ENCODE measurements at regions of chr4 and their contacts with region 1.

Region 1: DNA sequence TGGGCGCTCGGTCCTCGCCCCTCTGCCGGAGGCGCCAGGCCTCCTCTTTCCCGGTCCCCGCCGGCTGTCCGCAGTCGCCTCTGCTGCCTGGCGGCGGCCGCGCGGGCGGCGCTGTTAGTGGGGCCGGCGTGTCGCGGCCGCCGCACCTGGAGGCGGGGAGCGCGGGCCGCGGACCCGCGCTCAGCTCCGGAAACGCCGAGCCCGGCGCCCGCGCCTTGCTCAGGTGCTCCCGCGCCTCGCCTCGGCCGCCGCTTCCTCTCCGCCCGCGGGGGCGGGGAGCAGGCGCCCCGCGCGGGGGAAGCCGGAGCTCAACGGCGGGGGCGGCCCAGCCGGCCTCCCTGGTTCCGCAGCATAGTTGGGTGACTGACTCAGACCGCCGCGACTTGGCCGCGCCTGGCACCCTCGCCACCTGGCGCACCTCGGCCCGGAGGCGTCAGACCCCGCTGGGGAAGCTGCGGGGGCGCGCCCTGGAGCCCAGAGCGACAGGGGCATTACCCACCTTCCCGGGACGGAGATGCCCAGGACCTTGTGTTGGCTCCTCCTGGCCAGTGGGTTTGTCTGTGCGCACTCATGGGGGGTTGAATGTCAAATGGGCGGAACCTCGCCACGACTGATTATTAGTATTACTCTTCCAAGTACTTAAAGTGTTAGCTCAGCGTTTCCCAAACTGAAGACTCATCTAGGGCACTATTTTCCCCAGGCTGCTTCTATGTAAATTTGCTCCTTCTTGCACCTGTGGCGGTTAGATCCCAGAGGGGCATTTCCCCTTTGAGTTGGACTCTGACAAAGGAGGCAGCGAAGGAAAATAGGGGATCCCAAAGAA is at the start of gene ARAP2:
- DNase-seq: peak; percentile 81 to 89
- ATAC-seq: peak; percentile 78 to 87 (median 87)
- H3K4me3 ChIP-seq: peak within 1 kb of the TSS; percentile 84
- H3K4me3 Mint-ChIP-seq: peak within 1 kb of the TSS; percentile 99
- H3K27ac ChIP-seq: peak within 1 kb of the TSS; percentile 97
- H3K27ac Mint-ChIP-seq: peak within 1 kb of the TSS; percentile 95 to 99
- H3K4me1 ChIP-seq: peaks cover 14% of the 10 kb centered on the region
- H3K4me1 Mint-ChIP-seq: peaks cover 51 to 53% of the 10 kb centered on the region in 2 donors
- H3K27me3 ChIP-seq: no peaks in the 10 kb centered on the region
- H3K27me3 Mint-ChIP-seq: no peaks in the 10 kb centered on the region
- CTCF ChIP-seq: no peak
- total RNA-seq, gene ARAP2: 199 to 295 (median 270) TPM

Region 2: DNA sequence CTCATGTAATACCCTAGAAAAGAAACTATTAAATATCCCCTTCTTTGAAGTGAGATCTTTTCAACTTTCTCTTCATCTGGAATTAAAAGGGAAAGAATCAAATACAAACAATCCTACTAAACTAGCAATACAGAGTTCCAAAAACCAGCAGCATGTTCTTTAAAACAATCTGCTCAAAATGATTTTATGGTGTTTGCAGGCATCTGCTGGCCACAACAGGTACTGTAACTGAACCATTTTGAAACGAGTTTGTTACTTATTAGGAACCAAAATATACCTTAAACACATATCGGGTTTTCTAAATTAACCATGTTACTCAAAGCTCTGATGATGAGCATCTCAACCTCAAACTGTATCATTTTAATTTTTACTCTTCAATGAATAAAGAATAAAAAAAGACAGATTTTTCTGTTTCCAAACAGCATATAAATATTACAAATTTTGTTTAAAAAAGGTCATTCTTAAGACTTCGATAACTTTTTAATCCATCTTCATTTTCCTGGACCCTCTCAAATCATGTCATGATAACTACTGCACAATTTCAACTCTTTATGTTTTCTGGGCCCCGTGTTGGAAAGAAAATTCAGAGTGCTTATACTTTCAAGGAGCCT is 56.6 kb before region 1 on chr4:
- intact Hi-C with region 1: loop called (anchors 2 kb)
- DNase-seq: peak in 1 of 2 donors; percentile 56
- ATAC-seq: no peak
- H3K4me3 ChIP-seq: no peak overlapping the region
- H3K4me3 Mint-ChIP-seq: no peak overlapping the region
- H3K27ac ChIP-seq: peak overlapping the region; percentile 10
- H3K27ac Mint-ChIP-seq: peak overlapping the region; percentile 81 to 87
- H3K4me1 ChIP-seq: peaks cover 15% of the 10 kb centered on the region
- H3K4me1 Mint-ChIP-seq: peaks cover 50 to 54% of the 10 kb centered on the region in 2 donors
- H3K27me3 ChIP-seq: no peaks in the 10 kb centered on the region
- H3K27me3 Mint-ChIP-seq: no peaks in the 10 kb centered on the region
- CTCF ChIP-seq: peak; percentile 84

Region 3: GRCh38 chr4:36208893-36209473 is 35.5 kb before region 1 on chr4:
- intact Hi-C with region 1: loop called (anchors 5 kb)
- DNase-seq: peak in 1 of 2 donors; percentile 69
- ATAC-seq: peak; percentile 73 to 87 (median 79)
- H3K4me3 ChIP-seq: no peak overlapping the region
- H3K4me3 Mint-ChIP-seq: peak overlapping the region; percentile 68
- H3K27ac ChIP-seq: peak overlapping the region; percentile 27
- H3K27ac Mint-ChIP-seq: peak overlapping the region; percentile 80 to 86
- H3K4me1 ChIP-seq: peaks cover 16% of the 10 kb centered on the region
- H3K4me1 Mint-ChIP-seq: peaks cover 54 to 56% of the 10 kb centered on the region in 2 donors
- H3K27me3 ChIP-seq: no peaks in the 10 kb centered on the region
- H3K27me3 Mint-ChIP-seq: no peaks in the 10 kb centered on the region
- CTCF ChIP-seq: no peak

Region 4: DNA sequence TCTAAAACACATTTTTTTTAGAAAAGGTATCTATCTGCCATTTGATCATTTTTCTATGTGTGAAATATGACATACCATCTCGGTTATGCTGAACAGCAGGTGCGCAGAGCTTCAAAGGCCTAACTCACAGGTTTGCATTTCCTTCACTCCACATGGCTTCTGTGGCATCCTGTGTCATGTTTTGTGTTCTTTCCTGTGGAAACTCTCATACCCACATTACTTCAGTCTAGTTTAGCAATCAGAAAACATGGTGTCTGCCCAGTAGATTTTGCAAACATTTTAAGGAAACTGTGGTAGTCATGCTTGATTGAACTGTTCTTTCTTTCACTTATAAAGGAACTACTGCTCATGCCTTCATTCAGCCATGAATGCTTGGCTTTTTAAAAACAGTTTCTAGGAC is 11.1 kb after region 1 on chr4:
- intact Hi-C with region 1: loop called (anchors 1 kb)
- DNase-seq: peak; percentile 52 to 92
- ATAC-seq: peak; percentile 77 to 91 (median 90)
- H3K4me3 ChIP-seq: no peak overlapping the region
- H3K4me3 Mint-ChIP-seq: peak overlapping the region; percentile 87
- H3K27ac ChIP-seq: peak overlapping the region; percentile 74
- H3K27ac Mint-ChIP-seq: peak overlapping the region; percentile 83 to 94
- H3K4me1 ChIP-seq: peaks cover 23% of the 10 kb centered on the region
- H3K4me1 Mint-ChIP-seq: peaks cover 53 to 63% of the 10 kb centered on the region in 2 donors
- H3K27me3 ChIP-seq: no peaks in the 10 kb centered on the region
- H3K27me3 Mint-ChIP-seq: no peaks in the 10 kb centered on the region
- CTCF ChIP-seq: no peak

Region 5: DNA sequence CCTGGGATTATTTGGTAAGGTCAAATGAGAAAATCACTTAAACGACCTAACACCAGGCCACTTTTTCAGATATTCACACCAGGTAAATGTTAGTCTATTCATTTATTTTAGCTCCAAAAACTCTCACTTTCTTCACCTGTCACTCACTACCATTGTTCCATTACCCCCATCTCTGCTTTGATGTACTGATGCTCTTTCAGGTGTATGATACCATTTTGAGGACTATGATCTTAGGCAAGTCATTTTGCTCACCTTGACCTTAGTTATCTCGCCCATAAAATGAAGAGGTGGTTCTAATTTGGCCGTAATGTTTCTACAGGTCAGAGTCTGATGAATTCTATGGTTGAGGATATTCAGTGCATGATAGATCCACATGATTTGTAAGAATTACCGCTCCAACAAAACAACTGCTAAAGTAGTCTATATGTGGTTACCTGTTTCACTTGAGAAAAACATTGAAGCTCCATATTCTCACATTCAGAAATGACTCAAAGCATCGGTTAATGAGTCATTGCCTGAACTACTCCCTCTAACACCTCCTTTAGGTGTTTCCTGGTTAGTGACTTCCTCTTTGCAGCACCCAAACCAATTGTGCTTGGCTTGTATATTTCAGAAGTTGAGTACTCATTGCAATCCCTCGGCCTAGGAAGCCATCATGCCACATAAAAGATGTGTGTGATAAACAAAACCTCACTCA is 41.5 kb after region 1 on chr4:
- intact Hi-C with region 1: loop called (anchors 1 kb)
- DNase-seq: peak; percentile 39 to 87
- ATAC-seq: peak; percentile 72 to 87 (median 84)
- H3K4me3 ChIP-seq: peak overlapping the region; percentile 34
- H3K4me3 Mint-ChIP-seq: peak overlapping the region; percentile 98
- H3K27ac ChIP-seq: peak overlapping the region; percentile 98
- H3K27ac Mint-ChIP-seq: peak overlapping the region; percentile 98
- H3K4me1 ChIP-seq: peaks cover 11% of the 10 kb centered on the region
- H3K4me1 Mint-ChIP-seq: peaks cover 88 to 94% of the 10 kb centered on the region in 2 donors
- H3K27me3 ChIP-seq: no peaks in the 10 kb centered on the region
- H3K27me3 Mint-ChIP-seq: no peaks in the 10 kb centered on the region
- CTCF ChIP-seq: no peak

Region 6: DNA sequence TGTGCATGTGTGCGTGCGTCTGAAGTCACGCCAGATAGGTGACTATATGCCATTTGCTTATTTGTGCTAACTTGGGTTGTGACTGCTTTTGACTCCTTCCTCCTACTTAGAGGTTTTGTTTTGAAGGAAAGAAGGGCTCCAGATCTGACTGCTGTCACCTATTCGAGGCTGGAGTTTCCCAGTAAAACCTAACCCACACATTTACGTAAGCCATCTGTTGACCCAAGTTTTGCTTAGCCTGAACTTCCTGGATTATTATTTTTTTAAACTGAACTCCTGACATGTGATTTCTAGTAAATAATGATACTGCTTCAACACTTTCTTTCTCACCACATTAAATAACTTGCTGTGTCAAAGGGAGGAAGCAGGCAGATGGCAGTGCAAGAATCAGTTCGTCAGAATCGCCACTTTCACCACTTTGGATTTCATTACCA is 78.5 kb after region 1 on chr4:
- intact Hi-C with region 1: loop called (anchors 2 kb)
- DNase-seq: peak in 1 of 2 donors; percentile 88
- ATAC-seq: peak; percentile 77 to 86 (median 83)
- H3K4me3 ChIP-seq: no peak overlapping the region
- H3K4me3 Mint-ChIP-seq: peak overlapping the region; percentile 67
- H3K27ac ChIP-seq: peak overlapping the region; percentile 58
- H3K27ac Mint-ChIP-seq: peak overlapping the region; percentile 17 to 39
- H3K4me1 ChIP-seq: peaks cover 22% of the 10 kb centered on the region
- H3K4me1 Mint-ChIP-seq: peaks cover 68 to 71% of the 10 kb centered on the region in 2 donors
- H3K27me3 ChIP-seq: no peaks in the 10 kb centered on the region
- H3K27me3 Mint-ChIP-seq: no peaks in the 10 kb centered on the region
- CTCF ChIP-seq: no peak

Region 7: GRCh38 chr4:36385951-36386571 is 141.6 kb after region 1 on chr4:
- intact Hi-C with region 1: loop called (anchors 2 kb)
- DNase-seq: peak; percentile 43 to 85
- ATAC-seq: peak; percentile 88 to 96 (median 91)
- H3K4me3 ChIP-seq: no peak overlapping the region
- H3K4me3 Mint-ChIP-seq: peak overlapping the region; percentile 38
- H3K27ac ChIP-seq: peak overlapping the region; percentile 24
- H3K27ac Mint-ChIP-seq: peak overlapping the region; percentile 47 to 73
- H3K4me1 ChIP-seq: peaks cover 10% of the 10 kb centered on the region
- H3K4me1 Mint-ChIP-seq: peaks cover 18 to 19% of the 10 kb centered on the region in 2 donors
- H3K27me3 ChIP-seq: peaks cover 33% of the 10 kb centered on the region
- H3K27me3 Mint-ChIP-seq: peaks cover 42 to 58% of the 10 kb centered on the region in 2 donors
- CTCF ChIP-seq: no peak

Measured in natural killer cell (primary cell).